ENCODE measurements at regions of chr2 and their contacts with region 1.

Region 1: DNA sequence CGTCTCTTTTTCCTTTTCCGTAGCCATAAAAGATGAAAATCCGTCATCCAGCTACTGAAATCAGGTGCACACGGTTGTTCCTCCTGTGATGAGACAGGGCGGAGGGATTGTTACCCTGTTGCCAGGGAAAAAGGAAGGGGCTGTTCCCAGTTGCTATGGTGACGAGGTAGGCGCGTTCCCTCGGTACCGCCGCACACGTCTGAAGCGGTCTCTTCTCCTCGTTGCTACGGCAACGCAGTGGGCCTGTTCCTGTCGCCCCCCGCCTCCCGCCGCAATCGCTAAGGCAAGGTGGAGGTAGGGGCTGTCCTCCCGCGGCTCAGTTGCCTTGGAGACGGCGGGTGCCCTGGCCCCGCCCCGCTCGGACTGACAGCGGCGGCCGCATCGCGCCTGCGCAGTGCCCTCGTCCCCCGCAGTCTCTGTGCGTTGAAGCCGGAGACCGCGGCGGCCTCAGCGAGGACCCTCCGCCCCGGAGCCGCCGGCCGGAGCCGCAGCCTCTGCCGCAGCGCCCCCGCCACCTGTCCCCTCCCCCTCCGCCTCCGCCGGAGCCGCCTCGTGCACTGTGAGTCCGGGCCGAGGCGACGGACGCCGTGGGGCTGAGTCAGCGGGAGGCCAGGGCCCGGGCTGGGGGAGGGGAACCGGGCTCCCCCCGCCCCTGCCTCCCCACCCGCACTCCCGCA is at the start of gene MAPRE3:
- DNase-seq: peak; percentile 82 to 90 (median 88)
- H3K4me3 ChIP-seq: peak within 1 kb of the TSS; percentile 76
- H3K27ac ChIP-seq: peak within 1 kb of the TSS; percentile 53 to 89
- H3K4me1 ChIP-seq: peaks cover 4% of the 10 kb centered on the region
- H3K27me3 ChIP-seq: no peaks in the 10 kb centered on the region
- CTCF ChIP-seq: no peak
- EP300 ChIP-seq: no peak
- POLR2A ChIP-seq: peak; percentile 57
- total RNA-seq, gene MAPRE3: 23.8 to 51.8 (median 34.0) TPM

Region 2: DNA sequence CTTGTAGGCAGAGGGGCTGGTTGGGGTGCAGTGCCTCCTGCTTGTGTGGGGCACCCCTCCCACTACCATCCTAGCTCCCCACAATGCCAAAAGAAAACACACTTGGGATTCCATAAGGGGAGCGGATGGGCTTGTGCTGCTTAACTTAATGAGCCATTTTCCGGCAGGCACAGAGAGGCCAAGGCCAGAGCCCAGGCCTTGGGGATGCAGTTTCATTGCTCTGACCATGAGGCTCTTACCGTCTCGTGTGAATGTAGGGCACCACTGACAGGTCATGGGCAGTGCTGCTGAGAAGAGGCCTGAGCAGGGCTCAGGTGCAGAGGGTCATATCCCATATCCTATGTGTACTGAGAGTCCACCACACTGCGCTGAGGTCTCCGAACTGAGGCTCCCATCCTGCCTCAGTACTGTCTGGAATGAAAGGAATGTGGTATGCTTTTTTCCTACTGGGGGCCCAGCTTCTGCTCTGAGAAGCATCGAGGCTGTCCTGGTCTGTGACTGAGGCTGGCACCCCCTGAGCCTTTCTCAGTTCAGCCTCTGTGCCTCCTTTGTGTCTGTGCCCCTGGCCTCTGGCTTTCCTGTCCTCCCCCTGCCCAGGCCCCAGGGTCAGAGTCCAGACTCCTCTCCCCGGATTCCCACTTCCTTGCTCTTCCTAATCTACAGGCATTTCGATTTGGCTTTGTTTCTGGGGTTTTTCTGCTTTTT is 45.1 kb before region 1 on chr2:
- intact Hi-C with region 1: no loop called
- DNase-seq: no peak
- H3K4me3 ChIP-seq: no peak overlapping the region
- H3K27ac ChIP-seq: no peak overlapping the region
- H3K4me1 ChIP-seq: peaks cover 3% of the 10 kb centered on the region
- H3K27me3 ChIP-seq: no peaks in the 10 kb centered on the region
- CTCF ChIP-seq: no peak
- EP300 ChIP-seq: no peak
- POLR2A ChIP-seq: no peak

Region 3: DNA sequence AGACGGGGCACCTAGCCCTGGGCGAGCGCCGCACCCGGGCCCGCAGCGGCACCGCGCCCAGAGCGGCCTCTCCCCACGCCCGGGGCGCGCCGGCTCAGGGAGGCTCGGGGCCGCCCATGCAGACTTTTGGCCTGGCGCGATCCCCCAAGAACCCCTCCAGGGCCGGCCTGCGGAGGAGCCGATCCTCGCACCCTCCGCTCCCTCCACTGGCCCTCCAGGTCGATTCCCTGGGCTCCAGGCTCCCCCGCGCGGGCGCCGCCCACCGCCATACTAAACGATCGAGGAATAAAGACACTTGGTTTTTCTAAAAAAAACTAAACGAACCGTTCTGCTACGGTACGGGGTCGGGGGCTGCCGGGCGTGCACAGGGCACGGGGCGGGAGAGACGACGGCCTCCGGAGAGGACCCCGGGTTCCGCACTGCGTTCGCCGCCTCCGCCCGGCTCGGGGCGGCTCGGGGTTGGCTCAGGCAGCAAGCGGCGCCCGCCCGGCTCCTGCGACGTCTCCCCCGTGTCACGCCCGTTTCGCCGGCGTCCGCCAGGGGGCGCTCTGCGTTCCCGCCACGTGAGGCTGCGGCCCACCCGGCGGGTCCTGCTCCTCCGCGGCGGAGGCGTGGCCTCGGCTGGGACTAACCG is 115.8 kb after region 1 on chr2:
- intact Hi-C with region 1: loop called in 2 of 4 experiments (anchors 10 kb)
- DNase-seq: peak; percentile 93 to 98 (median 95)
- H3K4me3 ChIP-seq: peak overlapping the region; percentile 61
- H3K27ac ChIP-seq: peak overlapping the region; percentile 59 to 70
- H3K4me1 ChIP-seq: peaks cover 8% of the 10 kb centered on the region
- H3K27me3 ChIP-seq: no peaks in the 10 kb centered on the region
- CTCF ChIP-seq: peak; percentile 73 to 97 (median 97)
- EP300 ChIP-seq: no peak
- POLR2A ChIP-seq: peak; percentile 43

Region 4: DNA sequence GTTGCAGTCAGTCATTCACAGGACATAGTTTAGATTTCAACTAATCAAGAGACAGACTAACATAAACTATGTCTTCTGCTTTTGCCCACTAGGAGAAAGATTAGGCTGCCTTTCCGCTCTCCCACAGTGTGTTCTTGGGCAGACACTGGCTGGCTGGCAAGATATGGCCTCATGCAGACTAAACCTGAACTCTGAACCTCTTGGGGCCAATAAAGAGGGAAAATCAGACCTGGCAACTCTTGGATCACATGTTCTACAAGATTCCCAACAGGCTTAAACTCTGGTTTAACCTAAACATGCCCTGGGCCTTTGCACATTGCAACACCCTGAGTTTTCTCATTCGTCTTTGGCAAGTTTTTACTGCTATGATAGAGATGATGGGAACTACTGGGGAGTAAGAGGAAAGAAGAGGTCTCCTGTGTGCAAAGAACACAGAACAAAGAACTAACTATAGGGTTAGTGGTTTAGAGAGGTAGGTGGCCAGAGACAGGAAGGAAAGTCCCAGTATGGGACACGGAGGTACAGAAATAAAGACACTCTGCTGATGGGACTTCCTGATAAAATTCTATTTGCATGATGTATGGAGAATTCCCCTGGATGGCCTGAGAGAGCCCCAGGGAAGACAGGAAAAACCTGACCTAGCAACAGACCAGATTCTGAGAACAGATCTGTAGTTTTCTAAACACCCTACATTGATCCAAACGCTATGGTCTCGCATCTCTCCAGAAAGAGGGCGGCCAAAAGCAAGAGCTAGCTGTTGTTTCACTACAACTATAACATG is 239.4 kb after region 1 on chr2:
- intact Hi-C with region 1: loop called in 1 of 4 experiments (anchors 10 kb)
- DNase-seq: no peak
- H3K4me3 ChIP-seq: no peak overlapping the region
- H3K27ac ChIP-seq: no peak overlapping the region
- H3K4me1 ChIP-seq: peaks cover 7% of the 10 kb centered on the region
- H3K27me3 ChIP-seq: no peaks in the 10 kb centered on the region
- CTCF ChIP-seq: no peak
- EP300 ChIP-seq: no peak
- POLR2A ChIP-seq: no peak

Region 5: DNA sequence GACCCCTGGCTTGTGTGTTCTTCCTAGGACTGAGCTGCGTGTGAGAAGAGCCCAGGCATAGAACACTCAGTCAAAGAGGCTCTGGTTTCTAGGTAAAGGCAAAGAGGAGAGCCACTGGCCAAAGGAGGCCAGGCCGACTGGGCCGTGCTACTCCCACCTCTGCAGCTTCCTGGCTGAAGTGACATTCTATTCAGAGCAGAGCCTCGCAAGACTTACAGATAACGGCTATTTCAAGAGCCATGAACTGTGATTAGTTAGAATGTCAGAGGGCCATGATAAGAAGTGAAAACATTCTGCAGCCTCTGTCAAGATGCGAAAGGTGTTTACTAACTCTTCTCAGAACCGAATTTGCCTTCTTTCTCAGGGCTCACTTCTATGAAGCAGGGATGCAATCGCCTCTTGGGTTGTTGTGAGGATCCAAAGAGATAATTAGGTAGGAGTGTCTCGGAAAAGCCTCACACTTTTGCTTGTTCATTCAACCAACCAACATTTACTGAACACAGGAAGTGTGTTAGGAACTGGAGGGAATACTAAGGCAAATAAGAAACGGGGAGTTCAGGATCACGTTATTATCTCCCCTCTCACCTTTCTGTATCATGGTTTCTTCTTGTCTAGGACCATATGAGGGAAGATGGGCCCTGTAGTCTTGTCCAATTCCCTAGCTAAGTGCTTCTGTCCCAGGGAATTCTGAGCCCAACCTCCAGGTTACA is 301.4 kb after region 1 on chr2:
- intact Hi-C with region 1: loop called in 1 of 4 experiments (anchors 10 kb)
- DNase-seq: no peak
- H3K4me3 ChIP-seq: no peak overlapping the region
- H3K27ac ChIP-seq: no peak overlapping the region
- H3K4me1 ChIP-seq: no peaks in the 10 kb centered on the region
- H3K27me3 ChIP-seq: no peaks in the 10 kb centered on the region
- CTCF ChIP-seq: no peak
- EP300 ChIP-seq: no peak
- POLR2A ChIP-seq: no peak

Region 6: DNA sequence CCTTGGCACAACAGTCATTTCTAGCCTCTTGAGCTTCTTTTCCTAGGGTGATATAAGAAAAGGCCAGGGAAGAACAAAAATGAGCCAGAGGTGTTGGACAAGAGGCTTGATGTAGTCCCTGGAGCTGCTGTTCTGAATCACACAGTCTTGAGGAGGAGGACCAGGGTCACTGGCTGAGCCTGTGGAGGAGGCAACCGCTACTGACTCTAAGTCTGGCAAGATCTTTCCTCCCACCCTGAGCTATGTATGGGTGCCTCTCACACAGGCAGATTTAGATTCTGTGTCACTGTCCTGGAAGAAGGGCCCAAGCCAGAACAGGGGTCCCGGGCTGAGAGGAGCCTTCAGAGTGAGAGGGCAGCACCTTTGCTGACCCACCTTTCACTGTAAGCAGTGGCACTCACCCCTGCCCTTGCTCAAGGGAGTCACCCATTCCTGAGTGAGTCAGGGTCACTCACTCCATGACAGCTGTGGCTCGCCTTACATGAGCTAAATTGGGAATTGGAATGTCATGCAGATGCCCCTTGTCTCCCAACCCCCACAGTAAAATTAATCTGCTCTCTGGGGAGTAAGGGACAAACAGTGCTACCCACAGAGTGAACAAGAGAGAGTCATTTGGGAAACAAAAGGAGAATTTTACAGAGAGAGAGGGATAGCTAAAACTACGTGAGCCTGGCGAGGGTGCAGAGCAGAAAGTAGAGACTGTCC is 311.6 kb after region 1 on chr2 and contains the start of gene TRIM54:
- intact Hi-C with region 1: loop called in 2 of 4 experiments (anchors 10 kb)
- DNase-seq: no peak
- H3K4me3 ChIP-seq: no peak within 1 kb of the TSS
- H3K27ac ChIP-seq: no peak within 1 kb of the TSS
- H3K4me1 ChIP-seq: no peaks in the 10 kb centered on the region
- H3K27me3 ChIP-seq: no peaks in the 10 kb centered on the region
- CTCF ChIP-seq: no peak
- EP300 ChIP-seq: no peak
- POLR2A ChIP-seq: no peak
- total RNA-seq, gene TRIM54: 0.12 to 0.72 (median 0.49) TPM in 4 of 7 donors, not detected in the others

Measured in ovary (tissue), 10 donors.